CD8-positive, alpha-beta T cell (primary cell): ENCODE measurements at regions of chr20 and their contacts with region 1.

Region 1: DNA sequence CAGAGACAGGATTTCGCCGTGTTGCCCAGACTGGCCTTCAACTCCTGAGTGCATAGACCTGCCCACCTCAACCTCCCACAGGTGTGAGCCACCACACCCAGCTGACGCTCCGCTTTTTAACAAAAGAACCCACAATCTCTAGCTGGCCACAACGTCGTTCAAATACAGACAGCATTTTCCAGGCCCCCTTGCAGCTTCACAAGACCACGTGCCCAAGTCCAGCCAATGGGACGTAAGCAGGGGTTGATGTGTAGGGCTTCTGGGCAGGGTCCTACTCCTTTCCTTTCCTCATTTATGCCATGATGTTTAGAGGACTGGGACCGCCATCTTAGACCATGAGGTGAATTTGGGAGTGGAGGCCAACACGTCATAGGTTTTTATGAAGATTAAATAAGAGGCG is 81.0 kb downstream of the TFAP2C start:
- DNase-seq: no peak
- ATAC-seq: no peak
- H3K4me3 ChIP-seq: no peak overlapping the region
- H3K4me3 Mint-ChIP-seq: no peak overlapping the region
- H3K27ac ChIP-seq: no peak overlapping the region
- H3K27ac Mint-ChIP-seq: no peak overlapping the region
- H3K4me1 ChIP-seq: no peaks in the 10 kb centered on the region
- H3K4me1 Mint-ChIP-seq: no peaks in the 10 kb centered on the region
- H3K27me3 ChIP-seq: no peaks in the 10 kb centered on the region
- H3K27me3 Mint-ChIP-seq: peaks cover 13% of the 10 kb centered on the region
- CTCF ChIP-seq: no peak

Region 2: GRCh38 chr20:56689288-56689687 is 20.8 kb before region 1 on chr20:
- CTCF ChIA-PET with region 1: no interaction called
- POLR2A ChIA-PET with region 1: no interaction called
- intact Hi-C with region 1: loop called in 1 of 2 experiments (anchors 1 kb)
- DNase-seq: no peak
- ATAC-seq: no peak
- H3K4me3 ChIP-seq: no peak overlapping the region
- H3K4me3 Mint-ChIP-seq: no peak overlapping the region
- H3K27ac ChIP-seq: no peak overlapping the region
- H3K27ac Mint-ChIP-seq: no peak overlapping the region
- H3K4me1 ChIP-seq: no peaks in the 10 kb centered on the region
- H3K4me1 Mint-ChIP-seq: no peaks in the 10 kb centered on the region
- H3K27me3 ChIP-seq: no peaks in the 10 kb centered on the region
- H3K27me3 Mint-ChIP-seq: peaks cover 3% of the 10 kb centered on the region
- CTCF ChIP-seq: no peak

Region 3: DNA sequence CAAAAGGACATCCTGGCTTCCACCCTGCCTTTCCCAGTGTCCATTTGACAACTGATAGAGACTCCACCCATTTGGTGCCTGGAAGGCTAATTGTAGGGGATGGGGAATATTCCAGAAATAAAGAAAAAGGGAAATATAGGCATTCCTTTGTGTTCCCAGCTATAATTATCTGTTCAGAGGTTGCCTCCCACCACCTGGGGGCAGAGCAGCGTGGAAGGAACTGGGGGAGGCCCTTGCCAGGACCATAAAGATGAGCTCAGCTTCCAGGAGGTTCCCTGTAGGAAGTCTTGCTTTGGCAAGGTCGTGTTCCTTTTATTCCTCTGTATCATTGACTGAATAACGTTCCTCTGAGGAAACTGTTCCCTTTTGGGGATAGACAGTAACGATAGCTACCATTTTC is 133.7 kb after region 1 on chr20:
- CTCF ChIA-PET with region 1: no interaction called
- POLR2A ChIA-PET with region 1: no interaction called
- intact Hi-C with region 1: no loop called
- DNase-seq: no peak
- ATAC-seq: no peak
- H3K4me3 ChIP-seq: no peak overlapping the region
- H3K4me3 Mint-ChIP-seq: no peak overlapping the region
- H3K27ac ChIP-seq: no peak overlapping the region
- H3K27ac Mint-ChIP-seq: no peak overlapping the region
- H3K4me1 ChIP-seq: no peaks in the 10 kb centered on the region
- H3K4me1 Mint-ChIP-seq: no peaks in the 10 kb centered on the region
- H3K27me3 ChIP-seq: no peaks in the 10 kb centered on the region
- H3K27me3 Mint-ChIP-seq: peaks cover 8% of the 10 kb centered on the region
- CTCF ChIP-seq: no peak